ENCODE measurements at regions of chr9 and their contacts with region 1.

Region 1: DNA sequence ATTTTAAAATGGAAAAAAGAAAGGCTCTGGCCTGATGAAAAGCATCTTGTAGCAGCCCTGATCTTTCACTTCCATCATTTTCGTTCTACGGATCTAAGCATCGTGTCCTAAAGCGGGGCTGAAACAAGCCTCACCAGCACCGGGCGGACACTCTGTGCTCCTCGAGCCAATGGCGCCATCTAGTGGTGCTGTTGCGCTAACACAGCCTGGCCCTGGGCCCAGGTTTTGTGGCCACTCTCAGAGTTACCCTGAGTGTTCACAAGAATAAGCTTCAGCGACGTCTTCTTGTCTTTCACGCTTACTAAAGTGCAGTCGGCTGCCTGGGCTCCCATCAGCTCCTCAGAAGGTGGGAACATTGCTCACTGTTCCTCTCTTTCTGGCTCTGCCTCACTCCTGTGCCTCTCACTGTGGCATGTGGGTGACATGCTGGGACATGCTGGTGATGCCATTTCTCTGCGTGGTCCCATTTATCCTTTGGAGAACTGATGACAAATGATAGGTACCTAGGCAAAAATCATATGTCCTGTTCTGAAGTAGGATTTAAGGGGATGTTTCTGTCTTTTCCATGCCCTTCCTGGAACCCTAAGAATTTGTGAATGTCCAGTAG is 32.7 kb downstream of the DMRT3 start:
- DNase-seq: peak; percentile 79

Region 2: DNA sequence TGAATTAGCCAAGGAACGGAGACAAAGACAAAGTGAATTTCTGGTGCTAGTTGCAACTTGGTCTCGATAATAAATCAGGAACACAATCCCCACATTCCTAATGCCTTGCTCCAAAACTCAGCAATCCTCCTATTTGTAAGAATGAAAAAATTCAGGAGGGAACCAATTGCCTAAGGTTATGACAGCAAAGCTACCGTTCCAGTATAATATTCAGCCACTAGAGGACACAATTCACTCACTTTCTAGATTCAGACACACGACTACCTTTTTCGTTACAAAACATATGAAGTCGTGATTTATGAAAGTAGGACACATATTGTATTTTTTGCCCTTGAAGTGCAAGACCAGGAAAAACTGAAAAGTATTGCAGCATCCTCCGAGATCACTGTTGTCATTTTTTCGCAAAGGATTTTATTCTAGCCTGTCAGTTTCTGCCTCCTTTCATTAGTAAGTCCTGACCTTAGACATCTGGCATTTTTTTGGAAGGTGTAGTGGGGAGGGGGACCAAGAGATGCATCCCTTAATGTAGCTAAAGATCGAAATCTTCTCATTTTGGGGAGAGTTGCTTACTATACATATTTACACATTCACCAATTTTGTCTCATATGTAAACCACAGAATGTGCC is 661.4 kb before region 1 on chr9:
- intact Hi-C with region 1: loop called (anchors 10 kb)
- DNase-seq: no peak

Region 3: DNA sequence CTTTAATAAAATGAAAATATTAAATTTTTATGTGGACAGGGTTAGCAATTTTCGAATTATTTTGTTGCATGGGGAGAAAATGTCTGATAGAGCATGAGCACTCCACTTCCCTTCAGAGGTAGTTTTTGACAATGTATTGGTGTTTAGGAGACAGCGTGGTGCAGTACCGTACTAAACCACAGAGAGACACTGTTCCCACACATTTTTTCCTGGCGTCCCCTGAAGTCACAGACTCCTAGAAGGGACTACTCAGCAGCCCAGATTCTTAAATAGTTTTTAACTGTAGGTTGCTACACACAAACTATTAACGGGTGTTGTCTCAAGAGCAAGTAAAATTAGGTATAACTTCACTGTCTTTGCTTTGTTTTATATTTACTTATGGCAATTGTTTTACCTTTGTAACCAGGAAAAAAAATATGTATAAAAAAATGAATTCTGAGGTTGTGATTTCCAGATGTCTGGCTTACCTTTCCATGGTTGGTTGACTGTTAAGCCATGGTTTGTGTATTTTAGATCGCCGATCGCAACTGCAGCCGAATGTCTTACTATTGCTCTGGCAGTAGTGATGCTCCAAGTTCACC is 623.3 kb before region 1 on chr9:
- intact Hi-C with region 1: loop called (anchors 10 kb)
- DNase-seq: no peak

Region 4: DNA sequence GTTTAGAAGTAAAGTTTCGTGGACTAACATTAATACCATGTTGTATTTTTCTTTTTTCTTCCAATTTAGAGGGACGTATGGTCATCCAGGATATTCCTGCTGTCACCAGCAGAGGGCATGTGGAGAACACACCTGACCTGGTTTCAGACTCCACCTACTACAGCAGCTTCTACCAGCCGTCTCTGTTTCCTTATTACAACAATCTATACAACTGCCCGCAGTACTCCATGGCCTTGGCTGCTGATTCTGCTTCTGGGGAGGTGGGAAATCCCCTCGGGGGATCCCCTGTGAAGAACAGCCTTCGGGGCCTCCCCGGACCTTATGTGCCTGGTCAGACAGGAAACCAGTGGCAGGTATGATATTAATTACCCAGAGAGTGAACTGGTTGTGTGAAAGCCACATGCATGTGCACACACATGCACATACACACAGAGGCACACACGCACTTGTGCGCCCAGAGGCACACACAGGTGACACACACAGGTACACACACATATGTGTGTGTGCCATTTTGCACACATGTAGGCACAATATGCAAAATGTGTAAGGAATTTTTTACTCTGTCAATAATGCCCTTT is 115.3 kb before region 1 on chr9:
- intact Hi-C with region 1: loop called (anchors 5 kb)
- DNase-seq: no peak